ENCODE measurements at regions of chr10 and their contacts with region 1.

Region 1: GRCh38 chr10:75788394-75789205 is 357.2 kb downstream of the LRMDA start:
- DNase-seq: no peak
- H3K4me3 ChIP-seq: no peak overlapping the region
- H3K27ac ChIP-seq: no peak overlapping the region
- H3K4me1 ChIP-seq: no peaks in the 10 kb centered on the region
- H3K27me3 ChIP-seq: no peaks in the 10 kb centered on the region
- CTCF ChIP-seq: no peak

Region 2: DNA sequence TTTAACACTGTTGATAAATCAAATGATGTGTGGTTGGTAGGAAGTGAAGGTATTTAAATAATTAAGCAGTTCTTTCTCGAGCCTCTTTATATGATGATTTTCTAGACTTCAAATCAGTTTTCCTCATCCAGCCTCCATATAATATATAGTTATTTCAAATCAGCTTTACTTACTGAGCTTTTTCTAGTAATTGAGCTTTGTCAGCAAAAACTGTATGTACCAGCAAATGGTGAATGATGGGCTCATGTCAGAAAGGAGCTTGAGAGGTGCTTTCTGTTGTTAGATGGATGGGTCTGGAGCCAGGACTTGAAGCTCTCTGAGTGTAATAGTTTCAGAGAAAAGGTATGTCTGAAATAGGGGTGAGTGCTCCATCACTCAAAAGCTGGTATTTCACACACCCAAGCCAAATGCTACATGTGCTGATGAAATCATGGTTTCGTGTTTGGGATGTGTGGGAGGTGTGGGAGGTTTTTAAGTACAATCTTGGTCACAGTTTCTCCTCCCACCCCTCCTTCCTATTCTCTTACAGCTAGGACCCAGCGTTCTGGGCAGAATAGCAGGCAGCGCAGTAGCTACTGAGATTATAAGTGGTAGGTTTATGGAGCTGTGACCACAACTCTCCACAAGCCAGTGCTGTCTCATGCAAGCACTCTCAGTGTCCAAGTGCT is 301.4 kb before region 1 on chr10:
- CTCF ChIA-PET with region 1: no interaction called
- dilution Hi-C with region 1: no loop called
- in situ Hi-C with region 1: no loop called
- intact Hi-C with region 1: no loop called
- DNase-seq: peak; percentile 27
- H3K4me3 ChIP-seq: no peak overlapping the region
- H3K27ac ChIP-seq: no peak overlapping the region
- H3K4me1 ChIP-seq: no peaks in the 10 kb centered on the region
- H3K27me3 ChIP-seq: no peaks in the 10 kb centered on the region
- CTCF ChIP-seq: no peak

Region 3: DNA sequence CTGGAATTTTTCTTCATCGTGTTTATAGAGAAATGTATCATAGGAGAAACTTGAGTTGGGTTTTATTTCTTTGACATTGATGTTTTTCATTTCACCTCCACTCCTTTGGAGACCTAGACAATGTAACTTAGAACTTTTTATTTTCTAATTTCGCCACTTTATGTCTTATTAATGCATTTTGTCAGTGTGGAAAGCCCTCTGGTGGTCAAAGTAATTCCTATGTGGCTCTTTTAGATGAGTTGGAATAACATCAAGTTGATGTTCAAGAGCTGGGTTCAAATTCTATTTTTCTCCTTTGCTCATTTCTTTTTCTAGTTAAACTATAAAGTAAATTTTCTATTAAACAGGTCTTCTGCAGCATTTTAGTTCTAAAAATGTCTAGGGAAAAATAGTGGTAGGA is 121.4 kb after region 1 on chr10:
- CTCF ChIA-PET with region 1: no interaction called
- dilution Hi-C with region 1: no loop called
- in situ Hi-C with region 1: no loop called
- intact Hi-C with region 1: loop called (anchors 10 kb)
- DNase-seq: no peak
- H3K4me3 ChIP-seq: no peak overlapping the region
- H3K27ac ChIP-seq: no peak overlapping the region
- H3K4me1 ChIP-seq: peaks cover 4% of the 10 kb centered on the region
- H3K27me3 ChIP-seq: peaks cover 2% of the 10 kb centered on the region
- CTCF ChIP-seq: peak; percentile 22 to 47